ENCODE measurements at regions of chr3 and their contacts with region 1.

Region 1: DNA sequence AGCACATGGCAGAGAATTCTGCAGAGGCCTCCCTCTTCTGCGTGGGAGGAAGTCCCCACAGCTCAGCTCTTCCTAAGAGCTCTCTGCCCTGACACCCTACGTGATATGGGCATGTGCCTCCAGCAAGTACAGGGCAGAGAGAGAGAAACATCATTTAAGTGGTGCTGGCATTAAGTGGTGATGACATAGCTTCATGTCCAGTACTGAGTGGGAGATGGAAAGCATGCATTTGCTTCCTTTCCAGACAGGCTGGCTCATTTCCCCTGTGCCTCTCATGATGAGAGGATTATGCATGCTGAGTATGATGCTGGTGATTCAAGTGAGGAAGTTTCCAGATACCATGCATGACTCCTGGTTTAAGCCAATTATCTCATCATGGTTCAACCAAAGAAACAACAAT is 26.9 kb downstream of the BFSP2 start:
- DNase-seq: peak; percentile 46
- H3K4me3 ChIP-seq: no peak overlapping the region
- H3K27ac ChIP-seq: no peak overlapping the region
- H3K4me1 ChIP-seq: peaks cover 5% of the 10 kb centered on the region
- H3K27me3 ChIP-seq: no peaks in the 10 kb centered on the region
- CTCF ChIP-seq: no peak

Region 2: GRCh38 chr3:132722164-132723024 is 704.3 kb before region 1 on chr3 and contains the start of gene NPHP3:
- CTCF ChIA-PET with region 1: no interaction called
- dilution Hi-C with region 1: no loop called
- in situ Hi-C with region 1: no loop called
- intact Hi-C with region 1: loop called (anchors 1 kb)
- DNase-seq: peak; percentile 92
- H3K4me3 ChIP-seq: peak within 1 kb of the TSS; percentile 80 to 96 (median 94)
- H3K27ac ChIP-seq: peak within 1 kb of the TSS; percentile 68
- H3K4me1 ChIP-seq: peaks cover 4% of the 10 kb centered on the region
- H3K27me3 ChIP-seq: no peaks in the 10 kb centered on the region
- CTCF ChIP-seq: no peak
- total RNA-seq, gene NPHP3: 22.8 to 24.5 TPM

Region 3: GRCh38 chr3:133040696-133041523 is 385.8 kb before region 1 on chr3:
- CTCF ChIA-PET with region 1: interaction called, 5 read pairs
- dilution Hi-C with region 1: no loop called
- in situ Hi-C with region 1: no loop called
- intact Hi-C with region 1: loop called (anchors 1 kb)
- DNase-seq: peak; percentile 44
- H3K4me3 ChIP-seq: no peak overlapping the region
- H3K27ac ChIP-seq: no peak overlapping the region
- H3K4me1 ChIP-seq: peaks cover 10% of the 10 kb centered on the region
- H3K27me3 ChIP-seq: peaks cover 19% of the 10 kb centered on the region
- CTCF ChIP-seq: peak; percentile 74 to 86

Region 4: DNA sequence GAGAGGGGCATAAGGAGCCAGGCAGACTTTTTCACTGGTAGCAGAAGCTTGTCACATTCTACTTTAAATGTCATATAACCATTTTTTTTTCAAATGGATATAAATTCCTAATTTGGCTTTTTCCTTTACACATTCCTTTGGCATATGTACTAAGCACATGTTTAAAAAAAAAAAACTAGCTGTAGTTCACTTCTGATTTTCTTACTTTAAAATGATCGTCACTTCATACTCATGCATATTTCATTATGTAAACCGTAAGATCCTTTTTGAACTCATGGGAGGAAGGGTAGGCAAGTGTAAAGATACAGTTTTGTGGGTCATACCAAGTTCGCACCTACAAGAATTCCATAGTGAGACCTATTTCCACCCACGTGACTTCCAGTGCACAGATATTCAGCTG is 72.0 kb before region 1 on chr3:
- CTCF ChIA-PET with region 1: no interaction called
- dilution Hi-C with region 1: no loop called
- in situ Hi-C with region 1: no loop called
- intact Hi-C with region 1: no loop called
- DNase-seq: no peak
- H3K4me3 ChIP-seq: no peak overlapping the region
- H3K27ac ChIP-seq: no peak overlapping the region
- H3K4me1 ChIP-seq: no peaks in the 10 kb centered on the region
- H3K27me3 ChIP-seq: peaks cover 2% of the 10 kb centered on the region
- CTCF ChIP-seq: no peak